Dorsolateral prefrontal cortex (tissue), 120 donors: ENCODE measurements at regions of chr11 and their contacts with region 1.

Region 1: GRCh38 chr11:131370090-131370751 is at the start of gene NTM:
- DNase-seq: peak; percentile 38 to 88 (median 74)
- H3K4me3 ChIP-seq: peak within 1 kb of the TSS; percentile 38 to 86 (median 68)
- H3K27ac ChIP-seq: peak within 1 kb of the TSS in 52 of 59 donors; percentile 2 to 86 (median 68)
- H3K27me3 ChIP-seq: peaks cover 0 to 13% (median 0%) of the 10 kb centered on the region in 45 donors
- CTCF ChIP-seq: peak in 4 of 56 donors; percentile 14 to 25 (median 20)
- total RNA-seq, gene NTM: 122 to 220 (median 161) TPM

Region 2: DNA sequence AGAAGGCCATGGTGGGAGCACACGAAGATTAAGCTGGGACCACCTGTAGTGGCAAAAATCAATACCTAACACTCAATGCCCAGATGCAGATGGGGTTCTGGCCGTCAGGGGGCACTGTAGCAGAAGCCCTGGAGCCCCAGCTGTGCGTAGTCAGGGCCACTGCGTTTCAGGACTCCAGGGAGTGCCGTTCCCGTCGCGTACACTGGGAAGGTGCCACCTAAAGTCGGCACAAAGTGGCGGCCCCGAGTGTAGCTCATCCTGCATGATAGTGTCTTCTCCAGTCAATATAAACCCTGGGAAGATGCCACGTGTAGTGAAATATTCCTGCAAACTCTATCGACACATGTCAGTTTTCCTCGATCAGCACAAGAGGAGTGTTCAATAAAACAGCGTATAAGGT is 123.6 kb before region 1 on chr11:
- intact Hi-C with region 1: loop called in 1 of 2 experiments (anchors 5 kb)
- DNase-seq: peak; percentile 7 to 85 (median 72)
- H3K4me3 ChIP-seq: peak overlapping the region in 55 of 59 donors; percentile 17 to 65 (median 43)
- H3K27ac ChIP-seq: peak overlapping the region in 4 of 59 donors; percentile 12 to 44 (median 39)
- H3K27me3 ChIP-seq: peaks cover 0 to 8% (median 0%) of the 10 kb centered on the region in 45 donors
- CTCF ChIP-seq: peak in 55 of 56 donors; percentile 42 to 89 (median 76)

Region 3: GRCh38 chr11:131275580-131275979 is 94.6 kb before region 1 on chr11:
- intact Hi-C with region 1: loop called (anchors 2 to 10 kb)
- DNase-seq: no peak
- H3K4me3 ChIP-seq: no peak overlapping the region
- H3K27ac ChIP-seq: peak overlapping the region in 28 of 59 donors; percentile 1 to 96 (median 35)
- H3K27me3 ChIP-seq: no peaks in the 10 kb centered on the region
- CTCF ChIP-seq: no peak

Region 4: GRCh38 chr11:131486100-131486499 is 115.9 kb after region 1 on chr11:
- intact Hi-C with region 1: loop called in 1 of 2 experiments (anchors 5 kb)
- DNase-seq: peak in 7 of 10 donors; percentile 48 to 72 (median 64)
- H3K4me3 ChIP-seq: no peak overlapping the region
- H3K27ac ChIP-seq: peak overlapping the region in 52 of 59 donors; percentile 5 to 94 (median 78)
- H3K27me3 ChIP-seq: no peaks in the 10 kb centered on the region
- CTCF ChIP-seq: no peak

Region 5: GRCh38 chr11:131504199-131504949 is 134.2 kb after region 1 on chr11:
- intact Hi-C with region 1: loop called in 1 of 2 experiments (anchors 5 kb)
- DNase-seq: peak; percentile 26 to 84 (median 76)
- H3K4me3 ChIP-seq: peak overlapping the region in 22 of 59 donors; percentile 3 to 41 (median 24)
- H3K27ac ChIP-seq: peak overlapping the region in 54 of 59 donors; percentile 2 to 86 (median 68)
- H3K27me3 ChIP-seq: no peaks in the 10 kb centered on the region
- CTCF ChIP-seq: peak; percentile 15 to 80 (median 65)

Region 6: GRCh38 chr11:131579932-131580387 is 209.7 kb after region 1 on chr11:
- intact Hi-C with region 1: loop called in 1 of 2 experiments (anchors 10 kb)
- DNase-seq: peak in 4 of 10 donors; percentile 16 to 74 (median 56)
- H3K4me3 ChIP-seq: no peak overlapping the region
- H3K27ac ChIP-seq: peak overlapping the region in 58 of 59 donors; percentile 23 to 100 (median 98)
- H3K27me3 ChIP-seq: no peaks in the 10 kb centered on the region
- CTCF ChIP-seq: peak in 54 of 56 donors; percentile 20 to 73 (median 50)